OCI-LY7 (cell line): ENCODE measurements at regions of chr15 and their contacts with region 1.

Region 1: DNA sequence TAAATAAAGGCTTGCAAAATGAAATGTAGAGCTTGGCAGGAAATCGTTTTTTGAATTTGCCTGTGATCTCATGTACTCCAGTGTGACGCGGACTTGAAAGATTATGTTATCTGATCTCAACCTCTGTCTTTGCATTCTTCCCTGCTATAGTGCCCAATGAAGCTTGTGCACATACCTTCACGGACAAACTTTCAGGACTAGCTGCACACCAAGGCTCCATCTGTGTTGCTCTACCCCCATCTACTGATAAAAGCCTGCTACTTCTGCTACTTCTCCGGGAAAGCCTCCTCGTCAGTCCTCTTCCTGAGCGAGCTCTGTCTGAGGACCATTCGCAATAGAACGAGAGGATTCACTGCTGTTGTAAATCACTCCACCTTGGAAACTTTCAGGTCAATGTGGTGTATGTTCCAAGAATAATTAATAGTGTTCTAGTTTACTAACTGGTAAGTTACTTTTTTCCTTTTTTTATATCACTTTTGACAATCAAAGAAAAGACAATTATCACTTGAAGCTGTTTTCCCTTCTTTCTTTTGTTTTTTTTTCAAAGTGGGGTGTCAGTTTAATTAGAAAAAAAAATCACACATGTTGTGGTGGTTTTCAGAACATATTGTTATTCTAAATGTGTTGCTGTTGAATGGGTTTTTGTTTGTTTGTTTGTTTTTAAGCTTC is 217.6 kb downstream of the ARRDC4 start:
- DNase-seq: peak; percentile 36
- H3K4me3 ChIP-seq: no peak overlapping the region
- H3K27ac ChIP-seq: no peak overlapping the region
- H3K4me1 ChIP-seq: no peaks in the 10 kb centered on the region
- CTCF ChIP-seq: peak; percentile 69

Region 2: GRCh38 chr15:97909291-97909891 is 268.7 kb before region 1 on chr15:
- CTCF ChIA-PET with region 1: interaction called, 4 read pairs
- POLR2A ChIA-PET with region 1: no interaction called
- intact Hi-C with region 1: loop called (anchors 1 kb)
- DNase-seq: peak; percentile 51
- H3K4me3 ChIP-seq: no peak overlapping the region
- H3K27ac ChIP-seq: no peak overlapping the region
- H3K4me1 ChIP-seq: no peaks in the 10 kb centered on the region
- CTCF ChIP-seq: peak; percentile 88

Region 3: GRCh38 chr15:98085003-98085639 is 92.9 kb before region 1 on chr15:
- CTCF ChIA-PET with region 1: no interaction called
- POLR2A ChIA-PET with region 1: interaction called, 3 read pairs
- intact Hi-C with region 1: loop called (anchors 5 kb)
- DNase-seq: peak; percentile 48
- H3K4me3 ChIP-seq: no peak overlapping the region
- H3K27ac ChIP-seq: no peak overlapping the region
- H3K4me1 ChIP-seq: no peaks in the 10 kb centered on the region
- CTCF ChIP-seq: peak; percentile 84

Region 4: GRCh38 chr15:98126326-98127085 is 51.6 kb before region 1 on chr15:
- CTCF ChIA-PET with region 1: no interaction called
- POLR2A ChIA-PET with region 1: no interaction called
- intact Hi-C with region 1: loop called (anchors 5 kb)
- DNase-seq: no peak
- H3K4me3 ChIP-seq: no peak overlapping the region
- H3K27ac ChIP-seq: no peak overlapping the region
- H3K4me1 ChIP-seq: no peaks in the 10 kb centered on the region
- CTCF ChIP-seq: no peak

Region 5: DNA sequence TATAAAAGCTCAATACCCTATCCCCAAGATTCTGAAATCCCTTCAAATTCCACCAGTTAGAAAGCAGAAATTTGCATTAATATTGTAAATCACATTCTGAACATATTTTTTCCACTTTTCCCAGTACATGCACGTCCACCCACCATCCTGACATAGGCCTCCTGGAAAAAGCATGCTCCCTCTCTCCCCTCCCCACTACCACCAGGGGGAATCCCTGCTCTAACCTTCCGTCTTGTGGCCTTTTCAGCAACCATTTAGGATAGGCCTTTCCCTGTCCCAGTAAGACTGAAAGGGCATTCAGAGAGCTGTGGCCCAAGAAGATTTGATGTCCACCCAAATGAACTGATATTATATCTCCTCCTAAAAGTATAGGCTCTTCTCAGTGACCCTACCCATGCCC is 35.5 kb before region 1 on chr15:
- CTCF ChIA-PET with region 1: interaction called, 5 read pairs
- POLR2A ChIA-PET with region 1: interaction called, 3 read pairs
- intact Hi-C with region 1: loop called (anchors 2 kb)
- DNase-seq: no peak
- H3K4me3 ChIP-seq: no peak overlapping the region
- H3K27ac ChIP-seq: no peak overlapping the region
- H3K4me1 ChIP-seq: peaks cover 13% of the 10 kb centered on the region
- CTCF ChIP-seq: peak; percentile 34; the same call in 1 of the 2 replicates

Region 6: GRCh38 chr15:98401029-98401428 is 223.0 kb after region 1 on chr15:
- CTCF ChIA-PET with region 1: no interaction called
- POLR2A ChIA-PET with region 1: no interaction called
- intact Hi-C with region 1: no loop called
- DNase-seq: no peak
- H3K4me3 ChIP-seq: no peak overlapping the region
- H3K27ac ChIP-seq: no peak overlapping the region
- H3K4me1 ChIP-seq: no peaks in the 10 kb centered on the region
- CTCF ChIP-seq: no peak